Activated CD4-positive, alpha-beta T cell treated with anti-CD3 and anti-CD28 coated beads, Interleukin-2, amount 10 ng/mL, durations not matched to agents 24 days and 14 days (primary cell): ENCODE measurements at regions of chr7 and their contacts with region 1.

Region 1: GRCh38 chr7:88357781-88358525 is 51.3 kb upstream of the STEAP4 start:
- DNase-seq: no peak
- H3K4me3 Mint-ChIP-seq: no peak overlapping the region
- H3K27ac Mint-ChIP-seq: no peak overlapping the region
- H3K4me1 Mint-ChIP-seq: peaks cover 2% of the 10 kb centered on the region
- H3K27me3 Mint-ChIP-seq: peaks cover 8% of the 10 kb centered on the region

Region 2: GRCh38 chr7:88243345-88243909 is 114.5 kb before region 1 on chr7:
- intact Hi-C with region 1: loop called (anchors 2 kb)
- DNase-seq: no peak
- H3K4me3 Mint-ChIP-seq: no peak overlapping the region
- H3K27ac Mint-ChIP-seq: no peak overlapping the region
- H3K4me1 Mint-ChIP-seq: no peaks in the 10 kb centered on the region
- H3K27me3 Mint-ChIP-seq: peaks cover 13% of the 10 kb centered on the region